ENCODE measurements at regions of chr3 and their contacts with region 1.

Region 1: DNA sequence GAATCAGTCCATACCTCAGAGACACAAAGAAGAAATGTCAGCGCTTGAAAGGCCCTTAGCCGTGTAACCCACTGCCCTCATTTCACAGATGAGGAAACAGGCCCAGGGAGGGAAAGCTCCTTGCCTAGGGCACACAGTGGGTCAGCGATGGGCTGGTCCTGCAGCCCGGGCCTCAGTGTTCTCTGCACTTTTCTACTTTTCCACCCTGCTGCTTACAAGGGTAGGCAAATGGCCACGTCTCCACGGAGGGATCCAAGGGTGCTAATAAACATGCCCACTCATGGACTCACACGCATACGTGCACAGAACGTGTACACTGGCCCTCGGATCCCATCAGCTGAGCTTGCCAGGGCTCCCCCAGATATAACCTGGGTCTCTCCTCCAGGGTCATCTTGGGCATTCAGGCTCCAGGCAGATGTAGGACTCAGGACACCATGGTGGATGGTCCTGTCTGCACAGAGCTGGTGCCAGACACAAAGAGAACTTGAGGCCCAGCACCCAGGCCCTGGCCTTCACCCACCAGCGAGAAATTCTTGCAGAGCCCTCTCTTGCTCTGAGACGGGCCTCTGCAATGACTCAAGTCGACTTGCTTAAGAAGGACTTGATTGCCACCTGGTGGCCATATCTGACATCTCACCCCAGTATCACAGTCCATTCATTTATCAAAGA is 34.5 kb upstream of the VPS8 start:
- DNase-seq: peak; percentile 55
- ATAC-seq: peak; percentile 100
- H3K4me3 Mint-ChIP-seq: no peak overlapping the region
- H3K27ac Mint-ChIP-seq: no peak overlapping the region
- H3K4me1 Mint-ChIP-seq: no peaks in the 10 kb centered on the region
- H3K27me3 Mint-ChIP-seq: peaks cover 24% of the 10 kb centered on the region
- CTCF ChIP-seq: no peak

Region 2: GRCh38 chr3:184284708-184285107 is 492.8 kb before region 1 on chr3:
- CTCF ChIA-PET with region 1: no interaction called
- POLR2A ChIA-PET with region 1: no interaction called
- intact Hi-C with region 1: no loop called
- DNase-seq: no peak
- ATAC-seq: peak; percentile 7
- H3K4me3 Mint-ChIP-seq: no peak overlapping the region
- H3K27ac Mint-ChIP-seq: no peak overlapping the region
- H3K4me1 Mint-ChIP-seq: peaks cover 3% of the 10 kb centered on the region
- H3K27me3 Mint-ChIP-seq: peaks cover 10% of the 10 kb centered on the region
- CTCF ChIP-seq: no peak

Region 3: GRCh38 chr3:184371570-184372018 is 405.9 kb before region 1 on chr3:
- CTCF ChIA-PET with region 1: no interaction called
- POLR2A ChIA-PET with region 1: no interaction called
- intact Hi-C with region 1: loop called (anchors 1 kb)
- DNase-seq: no peak
- ATAC-seq: peak; percentile 97
- H3K4me3 Mint-ChIP-seq: no peak overlapping the region
- H3K27ac Mint-ChIP-seq: no peak overlapping the region
- H3K4me1 Mint-ChIP-seq: peaks cover 2% of the 10 kb centered on the region
- H3K27me3 Mint-ChIP-seq: peaks cover 15% of the 10 kb centered on the region
- CTCF ChIP-seq: no peak

Region 4: DNA sequence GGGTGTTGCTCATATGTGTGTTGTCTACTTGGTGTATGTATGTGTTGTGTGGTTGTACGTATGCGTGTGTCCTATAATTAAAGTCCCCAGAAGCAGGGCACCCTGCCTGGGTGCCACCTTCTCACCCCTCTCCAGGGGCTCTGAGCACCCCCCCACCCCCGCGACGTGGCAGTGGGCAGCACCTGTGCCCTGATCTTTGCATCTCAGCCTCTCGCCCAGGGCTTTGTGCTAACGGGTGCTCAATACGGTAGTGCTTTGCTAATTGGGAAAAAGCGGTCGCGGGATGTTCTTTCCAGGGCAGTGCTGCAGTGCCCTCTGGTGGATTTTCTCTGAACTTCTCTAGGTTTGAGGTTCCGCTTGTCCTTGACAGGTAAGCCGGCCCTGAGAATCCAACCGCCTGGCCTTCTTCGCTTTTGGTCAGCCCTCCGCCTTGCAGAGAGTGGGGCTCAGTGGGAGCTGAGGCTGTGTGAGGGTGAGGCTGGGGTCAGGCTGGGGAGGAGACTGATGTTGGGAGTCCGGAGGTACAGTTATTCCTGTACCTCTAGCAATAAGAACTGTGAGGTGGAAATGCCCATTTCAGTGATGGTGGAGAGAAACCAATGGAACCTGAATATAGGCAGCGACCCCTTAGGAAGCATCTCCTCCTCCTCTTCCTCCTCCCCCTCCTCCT is 233.5 kb before region 1 on chr3:
- CTCF ChIA-PET with region 1: no interaction called
- POLR2A ChIA-PET with region 1: no interaction called
- intact Hi-C with region 1: loop called (anchors 1 kb)
- DNase-seq: peak; percentile 56
- ATAC-seq: peak; percentile 85
- H3K4me3 Mint-ChIP-seq: no peak overlapping the region
- H3K27ac Mint-ChIP-seq: no peak overlapping the region
- H3K4me1 Mint-ChIP-seq: peaks cover 12% of the 10 kb centered on the region
- H3K27me3 Mint-ChIP-seq: peaks cover 21% of the 10 kb centered on the region
- CTCF ChIP-seq: peak; percentile 79

Region 5: DNA sequence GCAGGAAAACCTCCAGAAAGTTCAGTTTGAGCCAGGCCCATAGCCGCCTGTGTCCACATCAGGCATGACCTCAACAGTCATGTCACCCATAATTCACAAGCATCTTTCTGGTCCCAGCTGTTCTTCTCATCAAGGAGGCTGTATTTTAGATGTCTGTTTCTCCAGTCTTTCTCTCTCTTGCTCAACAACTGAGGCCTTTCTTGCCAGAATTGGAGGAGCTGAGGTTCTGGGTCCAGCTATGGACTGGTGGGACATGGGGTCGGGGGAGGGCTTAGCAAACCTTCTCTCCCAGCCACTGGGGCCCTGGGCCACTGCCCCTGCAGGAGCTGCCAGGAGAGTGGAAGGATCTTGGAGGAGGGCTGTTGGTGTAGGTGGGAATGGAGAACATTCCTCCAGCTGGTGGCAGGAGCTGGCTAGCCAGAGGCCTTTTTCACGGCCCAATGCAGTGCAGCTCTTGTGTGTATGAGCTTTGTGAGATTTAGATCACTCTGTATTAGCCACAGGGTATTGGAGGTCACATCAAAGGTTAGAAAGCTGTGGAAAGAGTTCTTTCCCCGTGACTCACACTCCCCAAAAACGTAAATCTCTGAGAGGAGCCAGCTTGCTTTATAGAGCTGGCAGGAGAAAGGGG is 89.1 kb before region 1 on chr3:
- CTCF ChIA-PET with region 1: no interaction called
- POLR2A ChIA-PET with region 1: no interaction called
- intact Hi-C with region 1: no loop called
- DNase-seq: no peak
- ATAC-seq: no peak
- H3K4me3 Mint-ChIP-seq: no peak overlapping the region
- H3K27ac Mint-ChIP-seq: no peak overlapping the region
- H3K4me1 Mint-ChIP-seq: peaks cover 52% of the 10 kb centered on the region
- H3K27me3 Mint-ChIP-seq: no peaks in the 10 kb centered on the region
- CTCF ChIP-seq: no peak

Region 6: GRCh38 chr3:184727357-184728009 is 50.0 kb before region 1 on chr3:
- CTCF ChIA-PET with region 1: interaction called, 5 read pairs
- POLR2A ChIA-PET with region 1: no interaction called
- intact Hi-C with region 1: loop called (anchors 1 kb)
- DNase-seq: no peak
- ATAC-seq: peak; percentile 70
- H3K4me3 Mint-ChIP-seq: no peak overlapping the region
- H3K27ac Mint-ChIP-seq: no peak overlapping the region
- H3K4me1 Mint-ChIP-seq: no peaks in the 10 kb centered on the region
- H3K27me3 Mint-ChIP-seq: peaks cover 4% of the 10 kb centered on the region
- CTCF ChIP-seq: no peak

Region 7: GRCh38 chr3:184811999-184812661 is 34.7 kb after region 1 on chr3 and contains the start of gene VPS8:
- CTCF ChIA-PET with region 1: no interaction called
- POLR2A ChIA-PET with region 1: interaction called, 11 read pairs
- intact Hi-C with region 1: no loop called
- DNase-seq: peak; percentile 95
- ATAC-seq: peak; percentile 92
- H3K4me3 Mint-ChIP-seq: peak within 1 kb of the TSS; percentile 96
- H3K27ac Mint-ChIP-seq: peak within 1 kb of the TSS; percentile 96
- H3K4me1 Mint-ChIP-seq: peaks cover 24% of the 10 kb centered on the region
- H3K27me3 Mint-ChIP-seq: no peaks in the 10 kb centered on the region
- CTCF ChIP-seq: no peak
- total RNA-seq, gene VPS8: 57.4 and 68.8 TPM in 2 replicates

Measured in activated B cell treated with CpG ODN at 0.5 μM for 24 hours (primary cell).